Right ventricle myocardium inferior (tissue), 1 donor: ENCODE measurements at regions of chr5 and their contacts with region 1.

Region 1: DNA sequence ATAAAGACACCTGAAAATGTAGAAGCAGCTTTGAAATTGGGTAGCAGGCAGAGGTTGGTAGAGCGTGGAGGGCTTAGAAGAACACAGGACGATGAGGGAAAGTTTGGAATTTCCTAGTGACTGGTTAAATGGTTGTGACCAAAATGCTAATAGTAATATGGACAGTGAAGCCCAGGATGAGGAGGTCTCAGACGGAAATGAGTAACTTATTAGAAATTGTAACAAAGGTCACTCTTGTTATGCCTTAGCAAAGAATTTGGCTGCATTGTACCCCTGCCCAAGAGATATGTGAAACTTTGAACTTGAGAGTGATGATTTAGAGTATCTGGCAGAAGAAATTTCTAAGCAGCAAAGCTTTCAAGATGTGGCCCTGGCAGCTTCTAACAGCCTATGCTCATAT is 382.5 kb downstream of the KCNN2 start:
- DNase-seq: no peak
- ATAC-seq: no peak

Region 2: DNA sequence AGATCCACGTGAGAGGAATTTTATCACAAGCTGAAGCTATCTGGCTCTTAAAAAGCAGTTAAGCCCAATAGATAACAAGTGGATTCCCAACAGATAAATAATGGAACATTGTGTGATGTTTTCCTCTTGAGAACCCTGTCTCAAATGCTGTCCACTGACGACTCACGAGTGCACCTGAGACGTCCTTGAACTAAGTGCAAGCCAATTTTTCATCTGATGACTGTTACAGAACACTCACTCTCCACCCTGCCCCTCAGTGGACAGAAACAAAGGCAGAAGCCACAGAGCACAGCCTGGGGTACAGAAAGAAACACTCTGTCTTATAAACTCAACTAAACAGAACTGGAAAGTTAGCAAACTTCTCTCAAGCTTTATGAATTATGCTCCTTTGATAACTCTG is 183.0 kb before region 1 on chr5:
- intact Hi-C with region 1: no loop called
- DNase-seq: no peak
- ATAC-seq: no peak

Region 3: DNA sequence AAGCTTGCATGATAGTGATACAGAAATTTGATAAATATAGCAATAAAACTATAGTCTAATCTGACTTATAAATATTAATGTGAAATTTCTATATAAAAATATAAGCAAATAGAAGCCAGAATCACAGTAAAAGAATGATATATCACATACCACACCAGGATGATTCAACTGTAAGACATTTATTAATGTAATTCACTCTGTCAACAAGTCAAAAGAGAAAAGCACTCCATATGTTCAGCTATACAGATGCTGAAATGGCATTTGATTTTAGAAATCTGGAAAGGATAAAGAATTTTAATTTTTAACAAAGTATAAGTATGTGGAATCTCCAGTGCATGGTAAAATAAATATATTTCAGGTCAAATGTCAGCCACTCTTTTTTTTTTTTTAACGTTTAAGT is 10.2 kb before region 1 on chr5:
- intact Hi-C with region 1: loop called (anchors 1 kb)
- DNase-seq: no peak
- ATAC-seq: no peak

Region 4: GRCh38 chr5:115124741-115125140 is 380.3 kb after region 1 on chr5:
- intact Hi-C with region 1: no loop called
- DNase-seq: no peak
- ATAC-seq: no peak